Left cardiac atrium (tissue), 4 donors: ENCODE measurements at regions of chr10 and their contacts with region 1.

Region 1: GRCh38 chr10:76411729-76412435 is 980.5 kb downstream of the LRMDA start:
- DNase-seq: peak; percentile 69
- ATAC-seq: peak; percentile 75 to 94

Region 2: GRCh38 chr10:76324283-76324682 is 87.6 kb before region 1 on chr10:
- intact Hi-C with region 1: loop called in 1 of 2 experiments (anchors 10 kb)
- DNase-seq: peak; percentile 55
- ATAC-seq: peak; percentile 82 to 93